Endothelial cell of umbilical vein (primary cell): ENCODE measurements at regions of chr5 and their contacts with region 1.

Region 1: GRCh38 chr5:171418316-171418981 is 998 bp upstream of the FGF18 start:
- DNase-seq: peak; percentile 69
- H3K4me3 ChIP-seq: peak overlapping the region in 1 of 3 experiments; percentile 23
- H3K27ac ChIP-seq: no peak overlapping the region
- H3K4me1 ChIP-seq: peaks cover 13% of the 10 kb centered on the region
- H3K27me3 ChIP-seq: peaks cover 5 to 25% of the 10 kb centered on the region in 2 experiments
- CTCF ChIP-seq: peak; percentile 87 to 96
- POLR2A ChIP-seq: no peak

Region 2: DNA sequence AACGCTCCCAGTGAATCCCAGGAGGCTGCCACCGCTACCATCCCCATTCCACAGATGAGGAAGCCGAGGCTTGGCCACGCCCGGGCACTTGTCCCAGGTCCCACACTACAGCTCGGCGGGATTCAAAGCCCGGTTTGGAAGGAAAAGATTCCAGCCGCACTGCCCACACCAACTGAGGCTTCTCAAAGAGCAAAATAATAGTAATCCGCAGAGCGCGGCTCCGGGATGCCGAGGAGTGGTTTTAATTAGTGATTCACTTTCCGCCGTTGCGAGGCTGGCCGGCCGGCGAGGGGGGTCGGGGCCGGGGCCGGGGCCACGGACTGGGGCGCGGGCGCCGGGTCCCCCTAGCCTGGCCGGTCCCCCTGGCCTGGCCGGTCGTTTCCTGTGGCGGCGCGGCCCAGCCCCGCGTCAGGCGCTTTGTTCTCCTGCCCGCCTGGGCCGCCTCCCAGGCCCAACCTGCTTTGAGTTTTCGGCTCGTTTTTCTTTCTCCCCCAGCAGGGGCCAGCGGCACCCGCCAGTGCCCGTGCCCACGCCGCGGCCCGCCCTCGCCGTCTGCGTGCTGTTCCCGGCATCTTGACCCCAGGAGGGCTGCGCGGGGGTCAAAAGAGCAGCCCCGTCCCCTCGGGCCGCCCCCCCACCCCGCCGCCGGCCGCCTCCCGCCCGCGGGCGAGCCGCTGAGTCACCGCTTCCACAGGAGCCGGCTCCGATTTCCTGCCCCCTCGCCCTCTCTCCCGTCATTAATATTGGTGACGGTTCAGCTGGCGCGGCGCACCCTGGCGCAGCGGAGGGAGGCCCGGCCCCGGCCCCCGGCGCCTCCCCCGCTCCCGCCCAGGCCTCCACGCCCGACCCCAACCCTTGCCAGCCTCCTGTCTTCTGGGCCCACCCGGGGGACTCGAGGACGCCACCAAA is 32.2 kb after region 1 on chr5:
- CTCF ChIA-PET with region 1: interaction called, 5 read pairs
- POLR2A ChIA-PET with region 1: no interaction called
- dilution Hi-C with region 1: no loop called
- intact Hi-C with region 1: loop called (anchors 1 kb)
- DNase-seq: peak; percentile 70
- H3K4me3 ChIP-seq: peak overlapping the region in 2 of 3 experiments; percentile 17 to 23
- H3K27ac ChIP-seq: peak overlapping the region; percentile 95
- H3K4me1 ChIP-seq: peaks cover 15% of the 10 kb centered on the region
- H3K27me3 ChIP-seq: peaks cover 0 to 2% of the 10 kb centered on the region in 2 experiments
- CTCF ChIP-seq: no peak
- POLR2A ChIP-seq: peak; percentile 32

Region 3: DNA sequence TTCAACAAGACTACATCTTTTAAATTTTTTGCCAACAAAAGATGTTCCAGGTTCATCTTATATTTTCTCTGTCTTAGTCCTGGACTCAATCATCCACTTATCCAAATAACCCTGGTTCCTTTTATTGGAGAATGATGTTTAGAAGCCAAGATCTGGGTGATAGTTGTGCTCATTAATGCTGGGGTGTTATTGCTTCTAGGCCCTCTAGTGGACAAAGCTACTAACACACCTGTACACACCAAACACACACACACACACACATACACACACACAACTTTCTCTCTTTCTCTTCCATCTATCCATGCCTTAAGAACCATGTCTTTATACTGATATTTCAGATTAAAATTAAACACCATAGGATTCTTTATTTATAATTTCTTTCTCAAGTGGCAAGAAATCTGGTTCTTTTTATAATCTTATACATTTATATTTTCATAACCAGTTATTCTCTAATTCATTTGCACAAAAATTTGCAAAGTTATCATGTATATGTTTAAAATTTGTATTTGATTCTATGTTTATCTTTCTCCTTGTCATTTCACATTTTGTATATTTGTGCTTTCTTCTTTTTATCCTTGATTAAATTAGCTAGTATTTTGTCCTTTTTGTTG is 188.1 kb after region 1 on chr5:
- CTCF ChIA-PET with region 1: interaction called, 7 read pairs
- POLR2A ChIA-PET with region 1: no interaction called
- dilution Hi-C with region 1: no loop called
- intact Hi-C with region 1: loop called (anchors 1 kb)
- DNase-seq: no peak
- H3K4me3 ChIP-seq: no peak overlapping the region
- H3K27ac ChIP-seq: no peak overlapping the region
- H3K4me1 ChIP-seq: peaks cover under 1% of the 10 kb centered on the region
- H3K27me3 ChIP-seq: peaks cover 5 to 6% of the 10 kb centered on the region in 2 experiments
- CTCF ChIP-seq: peak; percentile 34 to 37
- POLR2A ChIP-seq: no peak

Region 4: DNA sequence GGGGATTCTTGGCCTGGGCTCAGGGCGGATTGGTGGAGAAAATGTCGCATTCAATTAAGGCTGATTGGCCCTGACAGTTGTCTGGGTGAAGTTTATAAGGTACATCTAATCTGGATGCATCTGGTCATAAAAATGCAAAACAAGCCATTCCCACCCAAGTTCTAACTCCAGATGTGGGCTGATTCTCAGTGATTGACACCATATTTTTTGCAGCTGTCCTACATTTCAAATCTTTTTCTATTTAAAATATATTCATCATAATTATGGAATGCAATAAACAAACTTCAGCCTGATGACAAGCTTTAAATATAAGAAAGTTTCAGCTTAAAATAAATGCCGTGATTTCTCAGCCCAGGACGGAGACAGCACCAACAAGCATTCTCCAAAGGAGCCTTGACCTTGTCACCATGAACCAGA is 220.8 kb after region 1 on chr5:
- CTCF ChIA-PET with region 1: no interaction called
- POLR2A ChIA-PET with region 1: no interaction called
- dilution Hi-C with region 1: no loop called
- intact Hi-C with region 1: no loop called
- DNase-seq: no peak
- H3K4me3 ChIP-seq: no peak overlapping the region
- H3K27ac ChIP-seq: no peak overlapping the region
- H3K4me1 ChIP-seq: no peaks in the 10 kb centered on the region
- H3K27me3 ChIP-seq: no peaks in the 10 kb centered on the region
- CTCF ChIP-seq: no peak
- POLR2A ChIP-seq: no peak

Region 5: GRCh38 chr5:171850324-171851285 is 432.2 kb after region 1 on chr5:
- CTCF ChIA-PET with region 1: interaction called, 16 read pairs
- POLR2A ChIA-PET with region 1: no interaction called
- dilution Hi-C with region 1: no loop called
- intact Hi-C with region 1: loop called (anchors 5 kb)
- DNase-seq: no peak
- H3K4me3 ChIP-seq: no peak overlapping the region
- H3K27ac ChIP-seq: no peak overlapping the region
- H3K4me1 ChIP-seq: no peaks in the 10 kb centered on the region
- H3K27me3 ChIP-seq: no peaks in the 10 kb centered on the region
- CTCF ChIP-seq: peak in 1 of 2 donors; percentile 28
- POLR2A ChIP-seq: no peak

Region 6: DNA sequence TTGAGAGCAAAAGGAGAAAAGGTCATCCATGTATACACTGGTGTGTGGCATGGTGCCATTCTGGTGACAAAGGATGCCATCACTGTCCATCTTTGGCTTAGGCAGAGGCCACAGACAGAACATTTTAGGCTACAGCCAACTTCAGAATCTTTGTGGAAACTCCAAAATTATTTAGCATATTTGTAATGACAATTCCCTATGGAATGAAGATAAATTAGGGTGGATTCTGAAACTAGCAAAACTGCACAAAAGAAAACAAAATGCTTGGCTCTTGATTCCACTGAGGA is 495.5 kb after region 1 on chr5:
- CTCF ChIA-PET with region 1: interaction called, 77 read pairs
- POLR2A ChIA-PET with region 1: no interaction called
- dilution Hi-C with region 1: no loop called
- intact Hi-C with region 1: no loop called
- DNase-seq: no peak
- H3K4me3 ChIP-seq: no peak overlapping the region
- H3K27ac ChIP-seq: no peak overlapping the region
- H3K4me1 ChIP-seq: peaks cover 10% of the 10 kb centered on the region
- H3K27me3 ChIP-seq: no peaks in the 10 kb centered on the region
- CTCF ChIP-seq: no peak
- POLR2A ChIP-seq: no peak

Region 7: GRCh38 chr5:172059661-172060100 is 641.2 kb after region 1 on chr5:
- CTCF ChIA-PET with region 1: interaction called, 23 read pairs
- POLR2A ChIA-PET with region 1: no interaction called
- dilution Hi-C with region 1: no loop called
- intact Hi-C with region 1: loop called (anchors 5 kb)
- DNase-seq: peak; percentile 35
- H3K4me3 ChIP-seq: no peak overlapping the region
- H3K27ac ChIP-seq: no peak overlapping the region
- H3K4me1 ChIP-seq: no peaks in the 10 kb centered on the region
- H3K27me3 ChIP-seq: no peaks in the 10 kb centered on the region
- CTCF ChIP-seq: peak; percentile 50 to 61
- POLR2A ChIP-seq: no peak